ENCODE measurements at regions of chr12 and their contacts with region 1.

Region 1: DNA sequence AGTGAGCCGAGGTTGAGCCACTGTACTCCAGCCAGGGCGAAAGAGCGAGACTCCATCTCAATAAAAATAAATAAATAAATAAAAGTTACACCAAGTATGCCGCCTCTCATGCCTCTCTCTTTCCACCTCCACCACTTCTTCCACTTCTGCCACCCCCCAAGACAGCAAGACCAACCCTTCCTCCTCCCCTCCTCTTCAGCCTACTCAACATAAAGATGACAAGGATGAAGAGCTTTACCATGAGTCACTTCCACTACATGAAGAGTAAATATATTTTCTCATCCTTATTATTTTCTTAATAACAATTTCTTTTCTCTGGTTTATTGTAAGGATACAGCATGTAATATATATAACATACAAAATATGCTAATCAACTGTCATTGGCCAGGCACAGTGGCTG is 3.6 kb upstream of the TMED2 start:
- DNase-seq: no peak
- H3K4me3 ChIP-seq: no peak overlapping the region
- H3K4me3 Mint-ChIP-seq: peak overlapping the region in 1 of 8 donors; percentile 31
- H3K27ac ChIP-seq: no peak overlapping the region
- H3K27ac Mint-ChIP-seq: peak overlapping the region in 2 of 7 donors; percentile 48 to 97
- H3K4me1 ChIP-seq: peaks cover 26% of the 10 kb centered on the region
- H3K4me1 Mint-ChIP-seq: peaks cover 13 to 44% (median 26%) of the 10 kb centered on the region in 4 donors
- H3K27me3 ChIP-seq: no peaks in the 10 kb centered on the region
- H3K27me3 Mint-ChIP-seq: no peaks in the 10 kb centered on the region

Region 2: DNA sequence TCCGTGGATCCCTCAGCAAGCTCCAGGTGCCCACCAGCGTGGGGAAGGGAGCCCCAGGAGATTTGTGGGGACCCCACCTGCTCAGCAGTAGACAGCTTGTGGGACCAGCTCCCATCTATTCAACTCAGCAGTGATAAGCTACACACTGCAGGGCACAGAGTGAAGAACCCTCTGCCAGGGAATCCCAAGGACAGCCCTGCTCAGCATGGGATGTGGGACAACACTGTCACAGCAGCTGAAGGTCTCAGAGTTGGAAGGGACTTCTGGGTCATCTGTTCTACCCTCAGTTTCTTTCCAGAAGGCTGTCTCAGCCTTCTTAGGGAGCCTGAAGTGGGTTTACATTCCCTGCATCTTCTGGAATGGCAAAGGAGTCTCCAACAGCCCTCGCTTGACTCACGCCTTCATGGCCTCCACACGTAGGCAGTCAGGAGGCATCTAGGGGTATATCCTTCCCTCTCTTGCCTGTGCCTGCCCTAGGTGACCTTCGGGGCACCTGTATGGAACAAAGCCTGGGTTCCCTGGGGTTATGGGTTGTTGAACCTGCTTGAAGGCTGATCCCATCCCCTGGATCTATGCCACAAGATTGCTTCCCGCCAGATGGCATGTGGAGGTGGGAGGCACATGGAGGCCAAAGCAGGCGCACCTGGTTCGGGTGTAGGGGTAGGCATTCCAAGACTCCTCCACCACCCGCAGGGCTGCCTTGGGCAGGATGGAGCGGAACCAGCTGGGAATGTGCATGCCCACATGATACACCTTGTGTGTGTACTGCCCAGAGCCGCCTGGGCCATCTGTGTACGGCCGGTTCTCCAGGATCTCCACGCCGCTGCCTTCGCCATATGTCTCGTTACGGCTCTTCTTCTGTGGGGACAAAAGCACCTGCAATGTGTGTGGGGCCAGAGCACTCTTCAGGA is 567.3 kb before region 1 on chr12:
- CTCF ChIA-PET with region 1: no interaction called
- POLR2A ChIA-PET with region 1: no interaction called
- intact Hi-C with region 1: no loop called
- DNase-seq: no peak
- H3K4me3 ChIP-seq: no peak overlapping the region
- H3K4me3 Mint-ChIP-seq: no peak overlapping the region
- H3K27ac ChIP-seq: no peak overlapping the region
- H3K27ac Mint-ChIP-seq: no peak overlapping the region
- H3K4me1 ChIP-seq: no peaks in the 10 kb centered on the region
- H3K4me1 Mint-ChIP-seq: peaks cover 0 to 5% (median under 1%) of the 10 kb centered on the region in 4 donors
- H3K27me3 ChIP-seq: no peaks in the 10 kb centered on the region
- H3K27me3 Mint-ChIP-seq: no peaks in the 10 kb centered on the region

Region 3: GRCh38 chr12:123271001-123271729 is 309.6 kb before region 1 on chr12:
- CTCF ChIA-PET with region 1: interaction called, 20 read pairs
- POLR2A ChIA-PET with region 1: interaction called, 3 read pairs
- intact Hi-C with region 1: loop called (anchors 1 kb)
- DNase-seq: peak; percentile 70 to 74 (median 71)
- H3K4me3 ChIP-seq: peak overlapping the region in 1 of 2 donors; percentile 27
- H3K4me3 Mint-ChIP-seq: no peak overlapping the region
- H3K27ac ChIP-seq: no peak overlapping the region
- H3K27ac Mint-ChIP-seq: no peak overlapping the region
- H3K4me1 ChIP-seq: peaks cover 15% of the 10 kb centered on the region
- H3K4me1 Mint-ChIP-seq: peaks cover 10 to 32% (median 15%) of the 10 kb centered on the region in 4 donors
- H3K27me3 ChIP-seq: no peaks in the 10 kb centered on the region
- H3K27me3 Mint-ChIP-seq: no peaks in the 10 kb centered on the region

Region 4: DNA sequence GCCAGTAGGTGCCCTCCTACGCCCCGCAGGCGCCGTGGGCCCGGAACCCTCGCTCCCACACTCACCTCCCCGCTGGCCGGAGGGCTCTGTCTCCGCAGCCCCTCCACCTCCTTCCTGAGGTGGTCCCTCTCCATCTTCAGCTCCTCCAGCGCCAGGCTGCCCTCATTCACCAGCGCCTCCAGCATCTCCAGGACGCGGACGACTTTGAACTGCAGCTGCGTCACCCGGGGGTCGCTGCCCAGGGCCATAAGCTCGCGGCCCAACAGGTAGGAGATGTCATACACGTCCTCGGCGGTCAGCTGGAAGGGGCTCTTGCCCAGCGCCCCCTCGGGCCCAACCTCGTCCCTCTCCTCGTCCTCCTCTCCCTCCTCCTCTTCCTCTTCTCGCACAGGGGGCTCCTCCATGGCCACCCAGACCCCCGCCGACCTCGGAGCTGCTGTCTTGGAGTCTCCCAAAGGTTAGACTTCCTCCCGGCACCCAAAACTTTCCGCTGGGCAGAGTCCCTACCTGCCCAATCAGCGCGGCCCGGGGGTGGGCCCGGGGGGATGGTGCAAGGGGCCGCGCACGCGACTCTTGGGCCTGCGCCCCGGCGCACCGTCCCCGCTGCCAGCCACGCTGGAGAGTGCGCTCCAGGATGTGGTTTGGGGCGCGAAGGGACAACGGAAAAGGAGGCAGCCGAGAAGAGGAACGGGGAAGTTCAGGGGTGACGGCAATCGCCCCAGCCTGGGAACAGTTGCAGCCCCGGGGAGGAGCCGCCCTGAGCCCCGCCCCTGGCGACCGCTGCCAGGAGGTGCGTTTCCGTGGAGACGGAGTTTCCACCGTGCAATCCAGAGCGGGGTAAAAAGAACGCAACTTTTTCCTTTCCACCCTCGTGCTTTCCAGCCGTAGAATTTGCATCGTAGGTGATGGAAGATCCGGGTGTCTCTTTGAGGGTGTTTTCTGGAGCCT is 144.5 kb before region 1 on chr12 and contains the start of gene RILPL2:
- CTCF ChIA-PET with region 1: interaction called, 3 read pairs
- POLR2A ChIA-PET with region 1: no interaction called
- intact Hi-C with region 1: loop called (anchors 1 kb)
- DNase-seq: peak; percentile 92 to 97 (median 94)
- H3K4me3 ChIP-seq: peak within 1 kb of the TSS; percentile 79 to 95
- H3K4me3 Mint-ChIP-seq: peak within 1 kb of the TSS; percentile 93 to 97 (median 95)
- H3K27ac ChIP-seq: peak within 1 kb of the TSS; percentile 98
- H3K27ac Mint-ChIP-seq: peak within 1 kb of the TSS; percentile 88 to 99 (median 96)
- H3K4me1 ChIP-seq: peaks cover 52% of the 10 kb centered on the region
- H3K4me1 Mint-ChIP-seq: peaks cover 23 to 63% (median 42%) of the 10 kb centered on the region in 4 donors
- H3K27me3 ChIP-seq: no peaks in the 10 kb centered on the region
- H3K27me3 Mint-ChIP-seq: no peaks in the 10 kb centered on the region
- total RNA-seq, gene RILPL2: 11.6 to 11.9 TPM

Region 5: GRCh38 chr12:123533672-123534643 is 46.8 kb before region 1 on chr12 and contains the start of gene RILPL1:
- CTCF ChIA-PET with region 1: interaction called, 3 read pairs
- POLR2A ChIA-PET with region 1: interaction called, 14 read pairs
- intact Hi-C with region 1: loop called (anchors 2 kb)
- DNase-seq: peak in 4 of 5 donors; percentile 41 to 53 (median 46)
- H3K4me3 ChIP-seq: peak within 1 kb of the TSS; percentile 29 to 51
- H3K4me3 Mint-ChIP-seq: peak within 1 kb of the TSS; percentile 86 to 91 (median 88)
- H3K27ac ChIP-seq: peak within 1 kb of the TSS; percentile 11
- H3K27ac Mint-ChIP-seq: peak within 1 kb of the TSS; percentile 57 to 82 (median 74)
- H3K4me1 ChIP-seq: peaks cover 20% of the 10 kb centered on the region
- H3K4me1 Mint-ChIP-seq: peaks cover 11 to 31% (median 16%) of the 10 kb centered on the region in 4 donors
- H3K27me3 ChIP-seq: no peaks in the 10 kb centered on the region
- H3K27me3 Mint-ChIP-seq: no peaks in the 10 kb centered on the region
- total RNA-seq, gene RILPL1: 8.1 to 8.5 TPM

Region 6: GRCh38 chr12:123633379-123634141 is 52.8 kb after region 1 on chr12 and contains the starts of genes EIF2B1 and GTF2H3:
- CTCF ChIA-PET with region 1: no interaction called
- POLR2A ChIA-PET with region 1: no interaction called
- intact Hi-C with region 1: loop called (anchors 1 kb)
- DNase-seq: peak; percentile 94 to 97 (median 94)
- H3K4me3 ChIP-seq: peak within 1 kb of the TSS; percentile 83 to 92
- H3K4me3 Mint-ChIP-seq: peak within 1 kb of the TSS; percentile 92 to 98 (median 96)
- H3K27ac ChIP-seq: peak within 1 kb of the TSS; percentile 81
- H3K27ac Mint-ChIP-seq: peak within 1 kb of the TSS; percentile 92 to 99 (median 97)
- H3K4me1 ChIP-seq: peaks cover 23% of the 10 kb centered on the region
- H3K4me1 Mint-ChIP-seq: peaks cover 21 to 38% (median 31%) of the 10 kb centered on the region in 4 donors
- H3K27me3 ChIP-seq: no peaks in the 10 kb centered on the region
- H3K27me3 Mint-ChIP-seq: no peaks in the 10 kb centered on the region
- total RNA-seq, gene EIF2B1: 50.3 to 51.2 TPM
- total RNA-seq, gene GTF2H3: 18.9 to 24.6 TPM

Region 7: DNA sequence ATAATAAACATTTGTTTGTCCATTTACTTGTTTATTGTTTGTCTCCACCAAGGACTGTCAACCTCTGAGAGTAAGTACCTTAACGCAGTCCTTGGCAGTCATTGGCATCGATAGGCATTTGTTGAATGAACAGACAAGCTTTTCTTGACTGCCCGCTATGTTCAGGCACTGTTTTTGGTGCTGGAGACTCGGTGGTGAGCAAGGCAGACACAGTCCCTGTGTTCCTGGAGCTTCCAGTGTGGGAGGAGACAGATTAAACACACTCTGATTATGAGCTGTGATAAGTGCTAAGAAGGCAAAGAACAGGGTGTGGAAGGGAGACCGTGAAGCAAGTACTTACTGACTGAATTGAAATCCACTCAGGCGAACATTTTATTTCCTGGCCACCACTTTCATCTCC is 132.6 kb after region 1 on chr12:
- CTCF ChIA-PET with region 1: no interaction called
- POLR2A ChIA-PET with region 1: no interaction called
- intact Hi-C with region 1: no loop called
- DNase-seq: peak in 2 of 5 donors; percentile 1 to 8
- H3K4me3 ChIP-seq: peak overlapping the region; percentile 27 to 85
- H3K4me3 Mint-ChIP-seq: peak overlapping the region; percentile 84 to 97 (median 90)
- H3K27ac ChIP-seq: peak overlapping the region; percentile 60
- H3K27ac Mint-ChIP-seq: peak overlapping the region; percentile 84 to 93 (median 90)
- H3K4me1 ChIP-seq: peaks cover 34% of the 10 kb centered on the region
- H3K4me1 Mint-ChIP-seq: peaks cover 27 to 40% (median 35%) of the 10 kb centered on the region in 4 donors
- H3K27me3 ChIP-seq: no peaks in the 10 kb centered on the region
- H3K27me3 Mint-ChIP-seq: no peaks in the 10 kb centered on the region

Measured in CD4-positive, alpha-beta memory T cell (primary cell).